Activated CD8-positive, alpha-beta T cell treated with anti-CD3 and anti-CD28 coated beads, Interleukin-2, amount 10 ng/mL, durations not matched to agents 7 days and 5 days (primary cell): ENCODE measurements at regions of chr16 and their contacts with region 1.

Region 1: DNA sequence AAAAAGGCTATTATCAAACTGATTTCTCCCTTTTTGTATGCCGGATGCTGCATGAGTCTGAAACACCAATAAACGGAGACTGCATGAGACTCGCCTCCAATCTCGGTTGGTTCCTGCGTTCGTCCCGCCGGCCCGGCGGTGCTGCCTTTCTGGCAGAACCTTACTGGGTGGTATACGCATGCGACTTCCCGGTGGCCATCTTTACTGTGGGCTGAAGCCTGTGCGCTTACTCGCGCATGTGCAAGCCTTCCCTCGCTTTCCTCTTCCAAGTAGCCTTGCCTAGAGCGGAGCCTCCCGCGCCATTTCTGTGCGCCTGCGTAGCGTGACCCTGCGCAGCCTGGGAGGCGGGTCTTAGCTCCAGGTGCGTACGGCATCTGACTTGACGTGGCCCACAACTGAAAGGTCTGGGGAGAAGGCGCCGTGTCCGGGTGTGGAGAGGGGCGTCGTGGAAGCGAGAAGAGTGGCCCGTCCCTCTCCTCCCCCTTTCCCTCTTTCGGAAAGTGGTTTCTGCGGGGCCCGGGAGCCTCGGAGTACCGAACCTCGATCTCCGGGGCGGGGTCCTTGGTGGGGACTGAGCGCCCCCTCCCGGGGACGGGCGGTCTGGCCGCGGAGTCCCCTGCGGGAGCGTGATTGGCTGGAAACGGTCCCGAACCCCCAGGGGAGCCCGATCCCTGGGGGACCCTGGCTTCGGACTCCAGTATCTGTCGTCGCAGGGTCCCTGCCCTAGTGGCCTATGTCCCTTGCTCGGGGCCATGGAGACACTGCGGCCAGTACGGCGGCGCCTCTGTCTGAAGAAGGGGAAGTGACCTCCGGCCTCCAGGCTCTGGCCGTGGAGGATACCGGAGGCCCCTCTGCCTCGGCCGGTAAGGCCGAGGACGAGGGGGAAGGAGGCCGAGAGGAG is at the start of gene PAGR1:
- DNase-seq: peak; percentile 99
- ATAC-seq: peak; percentile 76
- H3K4me3 Mint-ChIP-seq: peak within 1 kb of the TSS; percentile 98
- H3K27ac Mint-ChIP-seq: peak within 1 kb of the TSS; percentile 92
- H3K4me1 Mint-ChIP-seq: peaks cover 70% of the 10 kb centered on the region
- H3K27me3 Mint-ChIP-seq: peaks cover 8% of the 10 kb centered on the region
- total RNA-seq, gene PAGR1: 39.1 TPM

Region 2: DNA sequence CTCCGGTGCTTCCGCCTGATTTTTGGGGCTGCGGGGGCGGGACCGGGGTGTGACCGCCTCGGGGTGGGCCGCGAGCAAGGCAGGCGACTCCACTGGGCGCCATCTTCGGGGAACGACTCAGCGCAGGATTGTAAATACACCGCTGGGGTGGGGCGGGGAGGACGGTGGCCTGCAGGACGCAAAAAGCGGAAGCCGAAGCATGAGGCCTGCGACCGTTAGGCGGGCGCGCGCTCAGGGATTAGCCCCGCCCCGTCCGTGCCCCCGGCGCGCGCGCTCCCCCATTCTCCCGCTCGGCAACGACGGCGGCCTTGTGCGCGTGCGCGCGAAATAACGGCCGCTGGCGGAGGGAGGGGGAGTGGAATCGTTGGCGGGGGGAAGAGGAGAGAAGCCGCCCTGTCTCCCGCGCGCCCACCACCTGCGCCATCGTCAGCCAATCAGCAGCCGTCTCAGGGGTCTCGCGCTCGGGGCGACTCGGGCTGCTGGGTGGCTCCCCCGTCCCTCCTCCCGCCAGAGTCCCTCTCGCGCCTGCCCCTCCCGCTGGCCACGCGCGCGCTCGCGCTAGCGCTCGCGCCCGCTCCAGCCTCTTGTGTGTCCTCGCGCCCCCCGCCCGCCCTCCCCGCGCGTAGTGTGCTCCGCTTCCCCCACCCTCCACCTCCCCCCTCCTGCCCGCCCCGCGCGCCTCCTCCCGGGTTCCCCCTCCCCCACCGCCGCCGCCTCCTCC is 10.5 kb before region 1 on chr16:
- CTCF ChIA-PET with region 1: interaction called, 70 read pairs
- POLR2A ChIA-PET with region 1: interaction called, 29 read pairs
- DNase-seq: peak; percentile 99
- ATAC-seq: peak; percentile 72
- H3K4me3 Mint-ChIP-seq: peak overlapping the region; percentile 89
- H3K27ac Mint-ChIP-seq: peak overlapping the region; percentile 93
- H3K4me1 Mint-ChIP-seq: peaks cover 49% of the 10 kb centered on the region
- H3K27me3 Mint-ChIP-seq: no peaks in the 10 kb centered on the region

Region 3: DNA sequence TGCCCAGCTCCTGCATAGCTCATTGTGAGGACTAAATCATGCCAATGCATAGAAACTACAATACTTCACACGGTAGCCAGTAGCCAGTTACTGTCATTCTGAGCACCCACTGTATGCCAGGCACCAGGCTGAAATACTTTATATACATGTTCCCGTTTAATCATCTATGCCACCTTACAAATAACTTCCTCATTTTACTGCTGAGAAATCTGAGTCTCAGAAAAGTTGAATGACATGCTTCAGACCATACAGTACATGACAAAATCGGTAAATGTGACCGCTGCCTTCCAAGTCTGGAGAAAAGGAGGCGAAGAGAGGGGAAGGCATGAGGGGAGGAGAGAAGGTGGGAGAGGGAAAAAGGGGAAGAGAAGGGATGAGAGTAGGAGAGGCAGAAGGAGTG is 224.2 kb after region 1 on chr16:
- CTCF ChIA-PET with region 1: no interaction called
- POLR2A ChIA-PET with region 1: no interaction called
- DNase-seq: no peak
- ATAC-seq: no peak
- H3K4me3 Mint-ChIP-seq: no peak overlapping the region
- H3K27ac Mint-ChIP-seq: no peak overlapping the region
- H3K4me1 Mint-ChIP-seq: peaks cover 3% of the 10 kb centered on the region
- H3K27me3 Mint-ChIP-seq: peaks cover 15% of the 10 kb centered on the region